Activated B cell treated with CpG ODN at 0.5 μM for 24 hours (primary cell): ENCODE measurements at regions of chr1 and their contacts with region 1.

Region 1: DNA sequence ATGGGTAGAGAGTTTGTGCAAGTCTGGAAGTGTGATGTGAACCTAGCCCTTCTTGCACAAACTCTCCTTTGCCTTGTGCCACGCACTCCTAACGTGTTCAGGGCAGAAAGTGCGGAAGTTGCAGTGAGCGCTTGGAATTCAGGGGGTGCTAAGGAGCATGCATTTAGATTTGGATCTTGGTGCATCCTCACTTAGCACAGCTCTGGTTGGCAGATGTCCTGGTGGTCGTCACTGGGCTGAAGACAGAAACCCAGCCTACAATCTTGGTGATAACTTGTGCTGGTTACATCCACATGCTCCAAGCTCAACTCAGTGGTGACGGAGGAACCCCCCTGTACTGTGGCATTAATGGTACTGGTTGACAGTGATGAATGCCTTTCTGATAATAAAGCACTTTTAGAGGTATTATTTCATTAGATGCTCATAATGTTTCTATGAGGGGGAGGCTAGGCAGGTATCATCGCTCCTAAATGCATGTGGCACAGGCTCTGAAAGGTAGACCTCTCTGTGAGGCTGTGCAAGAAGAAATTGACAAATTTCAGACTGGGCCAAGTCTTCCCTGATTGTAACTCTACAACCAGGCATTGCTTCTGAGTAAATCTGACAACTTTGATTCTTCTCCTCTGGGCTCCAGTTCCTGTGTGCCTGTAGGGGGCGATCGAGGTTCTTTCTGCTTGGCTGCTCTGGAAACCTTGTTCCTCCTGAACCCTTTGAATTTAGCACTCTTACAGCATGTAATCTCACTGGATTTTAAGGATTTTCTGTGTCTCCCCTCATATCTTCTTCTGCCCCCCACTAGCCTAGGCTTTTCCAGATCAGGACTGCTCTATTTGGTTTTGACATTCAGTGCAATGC is 40.6 kb downstream of the MAPKAPK2 start:
- DNase-seq: no peak
- ATAC-seq: peak; percentile 63
- H3K4me3 Mint-ChIP-seq: no peak overlapping the region
- H3K27ac Mint-ChIP-seq: peak overlapping the region; percentile 63
- H3K4me1 Mint-ChIP-seq: peaks cover 48% of the 10 kb centered on the region
- H3K27me3 Mint-ChIP-seq: no peaks in the 10 kb centered on the region
- CTCF ChIP-seq: no peak

Region 2: GRCh38 chr1:206513312-206514111 is 211.8 kb before region 1 on chr1:
- CTCF ChIA-PET with region 1: no interaction called
- POLR2A ChIA-PET with region 1: no interaction called
- intact Hi-C with region 1: no loop called
- DNase-seq: no peak
- ATAC-seq: no peak
- H3K4me3 Mint-ChIP-seq: no peak overlapping the region
- H3K27ac Mint-ChIP-seq: no peak overlapping the region
- H3K4me1 Mint-ChIP-seq: peaks cover 14% of the 10 kb centered on the region
- H3K27me3 Mint-ChIP-seq: peaks cover 15% of the 10 kb centered on the region
- CTCF ChIP-seq: no peak

Region 3: DNA sequence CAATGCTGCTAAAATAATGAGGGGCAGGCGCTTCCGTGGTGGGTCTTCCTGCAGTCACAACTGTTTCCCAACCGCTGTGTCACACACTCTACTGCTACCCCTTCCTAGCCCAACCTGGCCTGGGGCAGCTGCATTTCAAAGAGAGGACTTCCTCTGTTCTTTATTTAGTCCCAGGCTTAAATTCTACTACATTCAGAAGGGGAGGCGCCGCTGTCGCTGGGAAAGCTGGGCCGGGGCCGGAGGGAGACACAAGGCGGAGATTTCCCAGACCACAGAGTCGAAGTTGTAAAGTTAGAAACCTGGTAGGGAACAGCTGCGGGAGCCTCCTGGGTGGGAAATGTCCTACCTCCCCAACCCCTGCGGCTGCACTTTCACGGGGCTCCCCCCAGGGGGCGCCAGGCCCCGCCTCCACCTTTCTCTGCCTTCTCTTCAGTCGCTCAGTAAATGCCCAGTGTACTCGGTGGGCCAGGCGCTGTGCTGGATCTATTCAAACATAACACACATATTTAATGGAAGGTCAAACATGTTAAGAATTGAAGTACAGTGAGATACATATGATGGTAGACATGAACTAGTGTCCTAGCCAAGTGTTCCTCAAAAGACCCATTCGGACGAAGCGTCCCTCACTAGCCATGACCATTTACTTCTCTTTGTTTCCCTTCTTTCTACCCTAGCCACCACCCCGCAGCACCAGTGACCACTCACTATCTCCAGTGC is 66.9 kb before region 1 on chr1:
- CTCF ChIA-PET with region 1: interaction called, 40 read pairs
- POLR2A ChIA-PET with region 1: no interaction called
- intact Hi-C with region 1: loop called (anchors 2 kb)
- DNase-seq: peak; percentile 52
- ATAC-seq: peak; percentile 85
- H3K4me3 Mint-ChIP-seq: peak overlapping the region; percentile 58
- H3K27ac Mint-ChIP-seq: no peak overlapping the region
- H3K4me1 Mint-ChIP-seq: peaks cover 15% of the 10 kb centered on the region
- H3K27me3 Mint-ChIP-seq: peaks cover 4% of the 10 kb centered on the region
- CTCF ChIP-seq: no peak

Region 4: DNA sequence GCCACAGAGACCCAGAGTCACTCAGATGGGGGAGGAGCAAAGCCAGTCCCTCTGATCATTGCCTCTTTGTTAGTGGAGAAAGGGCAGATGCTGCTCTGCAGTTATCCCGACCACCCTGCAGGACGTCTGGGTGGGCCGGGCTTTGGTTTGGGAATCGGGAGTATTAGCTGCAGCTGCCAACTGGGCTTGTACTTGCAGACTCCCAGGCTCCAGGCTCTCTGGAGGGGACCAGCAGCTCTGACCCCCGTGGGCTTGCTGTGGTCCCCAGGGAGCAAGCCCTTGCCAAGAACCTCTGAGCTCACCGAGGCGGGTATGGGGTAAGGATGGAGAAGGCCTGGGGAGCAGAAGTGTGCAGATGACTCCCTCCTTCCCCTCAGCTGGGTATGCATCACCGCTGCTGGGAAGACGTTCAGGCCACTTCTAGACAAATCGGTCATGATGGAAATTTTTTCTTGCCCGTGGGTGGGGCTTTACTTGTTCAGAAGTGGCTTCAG is 19.0 kb before region 1 on chr1:
- CTCF ChIA-PET with region 1: interaction called, 19 read pairs
- POLR2A ChIA-PET with region 1: no interaction called
- intact Hi-C with region 1: loop called (anchors 1 kb)
- DNase-seq: no peak
- ATAC-seq: peak; percentile 14
- H3K4me3 Mint-ChIP-seq: peak overlapping the region; percentile 18
- H3K27ac Mint-ChIP-seq: peak overlapping the region; percentile 33
- H3K4me1 Mint-ChIP-seq: peaks cover 91% of the 10 kb centered on the region
- H3K27me3 Mint-ChIP-seq: no peaks in the 10 kb centered on the region
- CTCF ChIP-seq: no peak

Region 5: GRCh38 chr1:206856674-206857464 is 131.5 kb after region 1 on chr1:
- CTCF ChIA-PET with region 1: no interaction called
- POLR2A ChIA-PET with region 1: no interaction called
- intact Hi-C with region 1: loop called (anchors 1 kb)
- DNase-seq: no peak
- ATAC-seq: peak; percentile 78
- H3K4me3 Mint-ChIP-seq: no peak overlapping the region
- H3K27ac Mint-ChIP-seq: no peak overlapping the region
- H3K4me1 Mint-ChIP-seq: peaks cover 6% of the 10 kb centered on the region
- H3K27me3 Mint-ChIP-seq: peaks cover 12% of the 10 kb centered on the region
- CTCF ChIP-seq: no peak

Region 6: GRCh38 chr1:206935491-206936067 is 210.2 kb after region 1 on chr1:
- CTCF ChIA-PET with region 1: interaction called, 14 read pairs
- POLR2A ChIA-PET with region 1: interaction called, 4 read pairs
- intact Hi-C with region 1: loop called (anchors 2 kb)
- DNase-seq: peak; percentile 41
- ATAC-seq: no peak
- H3K4me3 Mint-ChIP-seq: no peak overlapping the region
- H3K27ac Mint-ChIP-seq: no peak overlapping the region
- H3K4me1 Mint-ChIP-seq: peaks cover 34% of the 10 kb centered on the region
- H3K27me3 Mint-ChIP-seq: no peaks in the 10 kb centered on the region
- CTCF ChIP-seq: no peak